ENCODE measurements at regions of chr5 and their contacts with region 1.

Region 1: DNA sequence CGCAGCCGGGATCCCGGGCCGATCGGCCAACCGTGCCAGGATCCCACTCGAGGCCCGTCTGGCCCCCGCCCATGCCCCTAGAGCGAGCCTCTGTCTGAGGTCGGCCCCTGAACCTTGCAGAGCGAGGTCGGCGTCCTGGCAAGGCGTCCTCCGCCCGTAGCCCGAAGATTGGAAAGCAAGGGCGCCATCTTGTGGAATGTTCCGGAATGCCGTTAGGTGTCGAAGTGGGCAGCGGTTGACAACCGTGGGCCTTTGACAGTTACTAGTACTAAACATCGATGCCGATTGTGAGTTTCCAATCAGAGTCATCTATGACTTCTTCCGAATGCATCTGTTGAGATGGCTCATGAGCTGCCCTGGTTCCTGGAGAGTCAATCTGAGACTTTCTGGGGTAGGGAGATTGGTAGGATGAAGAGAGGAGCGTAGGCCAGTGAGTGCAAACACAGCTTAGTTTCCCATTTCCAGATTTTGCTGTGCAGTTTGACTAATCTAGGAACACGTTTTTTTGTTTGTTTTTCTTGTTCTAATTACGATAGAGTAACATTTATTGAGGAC is 923 bp upstream of the PLK2 start:
- DNase-seq: peak; percentile 85
- H3K4me3 ChIP-seq: peak overlapping the region; percentile 94 to 99 (median 98)
- H3K27ac ChIP-seq: peak overlapping the region; percentile 96
- H3K4me1 ChIP-seq: peaks cover 25% of the 10 kb centered on the region
- H3K27me3 ChIP-seq: no peaks in the 10 kb centered on the region
- CTCF ChIP-seq: peak; percentile 72 to 84

Region 2: DNA sequence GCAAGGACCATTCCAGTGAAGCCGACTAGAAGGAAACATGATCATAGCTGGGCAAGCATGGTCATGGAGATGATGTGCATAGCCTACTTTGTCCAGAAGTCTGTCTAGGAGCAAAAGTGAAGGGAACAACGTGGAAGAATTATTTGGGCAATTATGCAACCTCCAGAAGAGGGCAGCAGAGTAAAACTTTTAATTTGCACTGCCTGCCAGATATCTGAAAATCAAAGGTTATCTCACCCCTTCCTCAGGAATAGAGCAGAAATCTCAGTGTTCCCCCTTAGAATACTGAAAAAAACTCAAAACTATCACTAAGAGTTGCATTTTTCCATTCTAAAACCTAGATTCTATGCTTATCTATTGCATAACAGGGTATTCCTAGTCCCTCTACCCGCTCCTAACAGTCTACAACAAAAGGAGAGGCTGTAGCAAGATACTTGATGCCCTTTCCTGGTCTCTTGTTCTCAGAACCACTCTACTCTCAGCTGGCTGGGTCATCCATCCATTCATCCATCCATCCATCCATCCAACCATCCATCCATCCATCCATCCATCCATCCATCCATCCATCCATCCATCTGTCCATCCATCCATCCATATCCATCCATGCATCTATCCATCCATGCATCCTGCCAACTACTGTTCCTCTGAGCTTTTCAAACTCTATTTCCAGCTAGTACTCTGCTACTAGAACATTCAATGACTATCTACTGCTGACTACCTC is 1559.8 kb before region 1 on chr5:
- CTCF ChIA-PET with region 1: no interaction called
- dilution Hi-C with region 1: no loop called
- in situ Hi-C with region 1: no loop called
- intact Hi-C with region 1: loop called (anchors 5 kb)
- DNase-seq: peak; percentile 39
- H3K4me3 ChIP-seq: no peak overlapping the region
- H3K27ac ChIP-seq: no peak overlapping the region
- H3K4me1 ChIP-seq: peaks cover 8% of the 10 kb centered on the region
- H3K27me3 ChIP-seq: no peaks in the 10 kb centered on the region
- CTCF ChIP-seq: peak; percentile 62 to 79

Region 3: DNA sequence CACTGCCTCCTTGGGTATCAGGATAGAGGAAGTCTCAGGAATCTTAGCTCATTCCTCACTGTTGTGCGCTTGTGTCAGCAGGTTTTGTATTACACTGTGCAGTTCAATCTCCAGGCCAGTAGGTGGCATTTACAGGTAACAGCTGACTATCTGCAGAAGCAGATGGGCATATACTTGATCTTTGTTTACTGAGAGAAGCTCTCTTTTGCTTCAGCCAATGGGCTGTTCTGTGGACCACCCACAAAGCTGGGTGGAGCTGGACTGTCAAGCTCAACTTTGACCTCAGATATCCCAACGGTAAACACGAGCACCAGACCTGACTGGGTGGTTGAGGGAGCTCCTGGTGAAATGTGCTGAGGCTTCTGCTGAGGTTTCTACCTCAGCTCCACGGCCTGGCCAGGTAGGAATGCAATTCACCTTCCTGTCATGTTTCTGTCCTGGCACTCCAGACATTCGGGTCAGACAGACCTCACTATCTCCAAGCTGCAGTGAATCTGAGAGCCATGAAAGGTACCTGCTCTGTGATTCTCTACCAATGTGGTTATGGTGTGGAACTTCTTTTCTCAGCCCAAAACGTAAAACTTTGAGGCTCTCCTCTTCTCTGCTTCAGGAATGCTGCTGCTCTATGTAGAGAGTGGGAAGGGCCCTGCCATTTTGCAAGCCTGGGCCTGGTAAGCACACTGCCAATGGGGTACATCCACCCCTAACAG is 810.3 kb before region 1 on chr5:
- CTCF ChIA-PET with region 1: interaction called, 21 read pairs
- dilution Hi-C with region 1: no loop called
- in situ Hi-C with region 1: no loop called
- intact Hi-C with region 1: loop called (anchors 1 kb)
- DNase-seq: peak; percentile 74
- H3K4me3 ChIP-seq: no peak overlapping the region
- H3K27ac ChIP-seq: no peak overlapping the region
- H3K4me1 ChIP-seq: peaks cover 5% of the 10 kb centered on the region
- H3K27me3 ChIP-seq: no peaks in the 10 kb centered on the region
- CTCF ChIP-seq: peak; percentile 91 to 93

Region 4: GRCh38 chr5:57825031-57825683 is 635.7 kb before region 1 on chr5:
- CTCF ChIA-PET with region 1: interaction called, 4 read pairs
- dilution Hi-C with region 1: loop called (anchors 25 kb)
- in situ Hi-C with region 1: no loop called
- intact Hi-C with region 1: loop called (anchors 1 kb)
- DNase-seq: peak; percentile 89
- H3K4me3 ChIP-seq: no peak overlapping the region
- H3K27ac ChIP-seq: peak overlapping the region; percentile 99
- H3K4me1 ChIP-seq: peaks cover 36% of the 10 kb centered on the region
- H3K27me3 ChIP-seq: no peaks in the 10 kb centered on the region
- CTCF ChIP-seq: no peak

Region 5: DNA sequence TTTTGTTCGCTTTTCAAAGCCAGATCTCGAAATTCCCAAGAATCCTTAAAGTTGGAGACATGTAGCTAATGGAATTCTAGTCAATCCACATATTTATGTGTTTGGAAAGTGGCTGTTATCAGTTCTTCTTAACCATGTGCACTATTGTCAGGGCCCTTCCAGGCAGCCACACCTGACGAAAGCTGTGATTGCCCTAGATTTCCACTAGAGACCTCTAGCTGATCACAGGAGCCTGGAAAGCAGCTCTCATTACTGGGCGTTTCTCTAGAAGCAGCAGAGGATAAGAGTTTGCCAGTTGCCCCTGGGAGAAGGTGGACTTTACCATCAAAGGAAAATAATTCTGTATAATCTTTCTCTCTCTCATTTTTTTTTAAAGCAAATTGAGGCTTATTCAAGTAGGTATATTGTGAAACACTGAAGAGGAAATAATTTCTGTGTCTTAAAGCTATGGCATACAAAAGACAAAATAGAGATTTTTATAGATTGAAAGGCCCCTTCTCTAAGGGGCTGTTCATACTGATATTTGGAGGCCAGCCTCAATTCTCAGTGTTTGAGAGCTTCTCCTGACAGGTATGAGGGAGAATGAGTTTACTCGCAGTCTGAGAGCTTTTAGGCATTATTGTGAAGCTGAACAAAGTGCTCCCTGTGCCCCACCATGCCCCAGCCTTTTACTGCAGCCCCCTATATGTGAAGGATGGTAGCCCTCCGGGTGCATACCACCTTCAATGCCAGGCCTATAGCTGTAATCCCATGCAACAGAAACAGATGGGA is 572.8 kb before region 1 on chr5:
- CTCF ChIA-PET with region 1: interaction called, 5 read pairs
- dilution Hi-C with region 1: loop called (anchors 25 kb)
- in situ Hi-C with region 1: loop called in 1 of 2 experiments (anchors 5 kb)
- intact Hi-C with region 1: loop called (anchors 1 kb)
- DNase-seq: peak; percentile 72
- H3K4me3 ChIP-seq: no peak overlapping the region
- H3K27ac ChIP-seq: peak overlapping the region; percentile 75
- H3K4me1 ChIP-seq: peaks cover 30% of the 10 kb centered on the region
- H3K27me3 ChIP-seq: no peaks in the 10 kb centered on the region
- CTCF ChIP-seq: peak; percentile 85 to 88

Region 6: GRCh38 chr5:58188262-58188651 is 272.6 kb before region 1 on chr5:
- CTCF ChIA-PET with region 1: no interaction called
- dilution Hi-C with region 1: loop called (anchors 5 kb)
- in situ Hi-C with region 1: loop called in 1 of 2 experiments (anchors 10 kb)
- intact Hi-C with region 1: loop called (anchors 1 kb)
- DNase-seq: peak; percentile 91
- H3K4me3 ChIP-seq: no peak overlapping the region
- H3K27ac ChIP-seq: peak overlapping the region; percentile 86
- H3K4me1 ChIP-seq: peaks cover 44% of the 10 kb centered on the region
- H3K27me3 ChIP-seq: no peaks in the 10 kb centered on the region
- CTCF ChIP-seq: peak; percentile 33 to 45

Region 7: DNA sequence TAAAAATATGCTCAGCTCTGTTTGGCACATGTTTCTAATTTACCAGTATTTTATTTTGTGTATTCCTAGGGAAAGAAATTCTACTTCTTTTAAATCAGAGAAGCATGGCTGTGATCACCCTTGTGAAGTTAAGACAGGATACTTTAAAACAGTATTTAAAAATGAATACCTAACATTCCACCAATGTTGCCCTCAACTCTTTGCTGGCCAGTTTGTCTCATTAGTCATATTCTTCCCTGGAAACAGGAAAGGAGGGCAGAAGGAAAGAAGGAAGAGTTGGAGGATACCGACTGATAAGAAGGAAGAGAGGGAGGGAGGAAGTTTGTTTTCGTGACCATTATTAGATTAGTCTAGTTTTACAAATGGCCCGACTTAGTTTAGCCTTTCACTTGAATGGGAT is 138.4 kb before region 1 on chr5:
- CTCF ChIA-PET with region 1: no interaction called
- dilution Hi-C with region 1: no loop called
- in situ Hi-C with region 1: no loop called
- intact Hi-C with region 1: no loop called
- DNase-seq: no peak
- H3K4me3 ChIP-seq: no peak overlapping the region
- H3K27ac ChIP-seq: no peak overlapping the region
- H3K4me1 ChIP-seq: peaks cover 7% of the 10 kb centered on the region
- H3K27me3 ChIP-seq: no peaks in the 10 kb centered on the region
- CTCF ChIP-seq: no peak

Region 8: GRCh38 chr5:58378613-58379390 is 82.0 kb before region 1 on chr5:
- CTCF ChIA-PET with region 1: no interaction called
- dilution Hi-C with region 1: no loop called
- in situ Hi-C with region 1: no loop called
- intact Hi-C with region 1: no loop called
- DNase-seq: no peak
- H3K4me3 ChIP-seq: no peak overlapping the region
- H3K27ac ChIP-seq: no peak overlapping the region
- H3K4me1 ChIP-seq: no peaks in the 10 kb centered on the region
- H3K27me3 ChIP-seq: no peaks in the 10 kb centered on the region
- CTCF ChIP-seq: no peak

Measured in mammary epithelial cell (primary cell).